ENCODE measurements at regions of chr19 and their contacts with region 1.

Region 1: DNA sequence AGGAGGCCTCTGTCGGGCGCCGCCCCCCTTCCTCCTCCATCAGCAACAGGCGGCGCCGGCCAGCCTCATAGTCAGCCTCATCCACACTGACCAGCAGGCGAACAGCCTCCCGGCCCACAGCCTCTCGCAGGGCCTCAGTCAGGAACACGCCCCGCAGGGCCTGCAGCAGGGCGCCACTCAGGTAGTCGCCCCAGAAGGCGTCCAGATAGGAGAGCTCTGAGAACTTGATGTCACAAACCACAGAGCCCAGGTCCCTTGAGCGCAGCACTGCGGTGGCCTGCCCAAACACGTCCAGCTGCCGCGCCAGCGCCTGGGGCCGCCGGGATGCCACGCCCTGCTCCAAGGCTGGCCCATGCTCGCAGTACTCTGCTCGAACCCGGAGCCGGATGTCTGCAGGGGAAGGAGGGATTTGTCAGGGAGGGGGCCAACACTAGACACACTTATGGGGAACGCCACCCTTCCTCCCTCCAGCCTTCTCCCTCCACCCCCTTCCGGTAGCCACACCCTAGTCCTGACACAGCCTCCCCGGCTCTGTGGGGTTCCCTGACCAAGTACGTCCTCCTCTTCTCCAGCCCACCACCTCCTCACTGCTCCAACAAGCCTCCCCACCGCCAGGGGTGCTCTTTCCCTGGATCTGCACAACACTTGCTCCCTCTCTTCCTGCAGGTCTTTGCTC is 17.9 kb downstream of the DEDD2 start:
- DNase-seq: peak; percentile 88
- CTCF ChIP-seq: peak; percentile 53

Region 2: GRCh38 chr19:42108527-42109389 is 90.8 kb before region 1 on chr19:
- in situ Hi-C with region 1: loop called (anchors 10 kb)
- DNase-seq: peak; percentile 88
- CTCF ChIP-seq: peak; percentile 100

Measured in GM13976 (cell line).